ENCODE measurements at regions of chr11 and their contacts with region 1.

Region 1: DNA sequence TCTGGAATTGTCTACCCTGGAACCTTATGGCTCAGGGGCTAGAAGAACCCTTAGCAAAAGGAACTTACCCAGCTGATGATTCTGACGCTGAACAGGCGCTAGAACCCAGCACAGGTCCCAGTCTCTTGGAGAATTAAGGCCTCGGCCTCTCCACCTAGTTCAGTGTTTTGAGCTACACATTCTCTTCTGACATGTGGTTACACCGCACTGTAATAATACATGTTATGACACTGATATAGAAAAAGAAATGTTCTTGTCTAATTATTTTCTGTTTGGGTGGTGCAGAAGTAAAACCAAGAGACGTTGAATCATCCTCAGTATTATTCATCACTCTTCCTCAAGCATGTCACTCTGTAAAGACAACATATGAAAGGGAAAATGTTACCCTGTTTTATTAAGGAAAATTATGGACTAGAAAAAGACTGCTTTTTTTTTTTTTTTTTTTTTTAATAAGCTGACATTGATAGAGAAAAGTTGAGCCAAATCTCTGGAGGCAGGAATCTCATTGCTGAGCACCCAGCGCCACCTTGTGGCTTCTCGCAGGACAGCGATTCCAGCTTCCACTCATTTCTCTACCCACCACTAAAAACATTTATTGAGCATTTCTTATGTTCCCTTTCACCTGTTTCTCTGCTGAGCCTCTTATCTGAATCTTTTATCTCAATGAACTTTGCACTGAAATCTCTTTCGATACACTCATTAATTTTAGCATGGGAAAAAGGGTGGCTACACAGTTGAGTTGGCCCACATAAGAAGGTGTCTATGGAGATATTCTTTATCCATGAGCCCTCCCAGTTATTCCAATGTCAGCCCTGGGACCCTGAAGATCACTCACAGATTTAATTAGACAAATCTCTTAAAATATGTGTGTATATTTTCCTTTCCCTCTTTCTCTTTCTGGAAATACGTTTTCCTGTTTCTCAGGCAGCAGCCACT is 12.6 kb upstream of the APLNR start:
- DNase-seq: no peak
- H3K4me3 ChIP-seq: peak overlapping the region in 1 of 2 experiments; percentile 21; a peak in 1 of 4 replicates
- H3K27ac ChIP-seq: peak overlapping the region in 1 of 2 experiments; percentile 94; a peak in 2 of 4 replicates
- H3K4me1 ChIP-seq: peaks cover 0 to 15% of the 10 kb centered on the region in 2 experiments; a peak in 1 of 4 replicates
- H3K27me3 ChIP-seq: no peaks in the 10 kb centered on the region; the same call in 1 of the 2 replicates
- CTCF ChIP-seq: peak; percentile 89
- EP300 ChIP-seq: no peak
- RAD21 ChIP-seq: peak; percentile 96

Region 2: GRCh38 chr11:56885177-56885576 is 364.5 kb before region 1 on chr11:
- CTCF ChIA-PET with region 1: interaction called, 10 read pairs
- POLR2A ChIA-PET with region 1: no interaction called
- DNase-seq: peak; percentile 23
- H3K4me3 ChIP-seq: no peak overlapping the region
- H3K27ac ChIP-seq: peak overlapping the region in 1 of 2 experiments; percentile 85; a peak in 2 of 4 replicates
- H3K4me1 ChIP-seq: peaks cover 0 to 10% of the 10 kb centered on the region in 2 experiments; a peak in 2 of 4 replicates
- H3K27me3 ChIP-seq: no peaks in the 10 kb centered on the region
- CTCF ChIP-seq: no peak
- EP300 ChIP-seq: no peak
- RAD21 ChIP-seq: no peak

Region 3: GRCh38 chr11:57111619-57112018 is 138.0 kb before region 1 on chr11:
- CTCF ChIA-PET with region 1: interaction called, 125 read pairs
- POLR2A ChIA-PET with region 1: no interaction called
- DNase-seq: no peak
- H3K4me3 ChIP-seq: no peak overlapping the region
- H3K27ac ChIP-seq: no peak overlapping the region
- H3K4me1 ChIP-seq: no peaks in the 10 kb centered on the region
- H3K27me3 ChIP-seq: no peaks in the 10 kb centered on the region
- CTCF ChIP-seq: no peak
- EP300 ChIP-seq: no peak
- RAD21 ChIP-seq: no peak

Region 4: DNA sequence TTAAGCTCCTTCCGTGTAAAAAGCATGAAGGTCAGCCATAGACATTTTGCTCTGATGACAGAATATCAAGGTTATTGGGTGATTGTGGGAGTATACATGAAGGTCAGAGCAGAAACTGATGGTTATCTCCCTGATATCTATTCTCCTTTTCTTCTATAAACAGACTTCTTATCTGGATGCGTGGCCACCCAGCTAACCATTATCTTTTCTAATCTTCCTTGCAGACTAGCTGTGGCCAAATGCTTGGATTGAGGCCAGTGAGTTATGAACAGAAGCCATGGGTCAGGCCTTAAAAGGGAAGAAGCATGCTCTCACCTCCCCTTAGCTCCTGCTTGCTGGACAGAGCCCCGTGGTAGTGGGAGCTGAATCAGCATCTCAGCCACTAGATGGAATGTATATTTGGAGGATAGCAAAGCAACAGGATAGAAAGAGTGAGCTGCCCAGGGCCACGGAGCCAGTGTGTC is 99.2 kb before region 1 on chr11:
- CTCF ChIA-PET with region 1: interaction called, 90 read pairs
- POLR2A ChIA-PET with region 1: interaction called, 6 read pairs
- DNase-seq: peak; percentile 41
- H3K4me3 ChIP-seq: no peak overlapping the region
- H3K27ac ChIP-seq: peak overlapping the region in 1 of 2 experiments; percentile 96; a peak in 2 of 4 replicates
- H3K4me1 ChIP-seq: peaks cover 0 to 43% of the 10 kb centered on the region in 2 experiments; a peak in 2 of 4 replicates
- H3K27me3 ChIP-seq: no peaks in the 10 kb centered on the region
- CTCF ChIP-seq: no peak
- EP300 ChIP-seq: peak; percentile 28 to 94; a peak in 2 of 4 replicates
- RAD21 ChIP-seq: peak; percentile 22; the same call in 1 of the 2 replicates

Region 5: DNA sequence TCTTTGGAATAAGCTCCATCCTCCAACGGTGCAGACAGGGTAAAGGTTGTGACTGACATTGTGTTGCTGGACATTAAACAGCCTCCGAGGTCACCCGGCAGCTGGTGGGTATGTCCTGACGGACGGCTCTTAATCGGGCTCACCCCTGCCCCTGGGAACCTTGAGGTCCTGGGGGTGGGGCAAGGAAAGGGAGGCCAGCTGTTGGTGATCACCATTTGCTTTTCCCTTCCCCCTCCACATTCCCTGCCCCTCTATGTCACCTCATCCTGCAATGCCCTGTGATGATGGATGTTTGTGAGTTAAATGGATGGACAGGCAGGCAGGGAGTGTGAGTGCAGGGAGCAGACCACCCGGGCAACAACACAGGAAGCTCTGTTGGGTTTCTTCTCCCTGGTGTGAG is 38.9 kb before region 1 on chr11:
- CTCF ChIA-PET with region 1: interaction called, 15 read pairs
- POLR2A ChIA-PET with region 1: no interaction called
- DNase-seq: no peak
- H3K4me3 ChIP-seq: no peak overlapping the region
- H3K27ac ChIP-seq: no peak overlapping the region
- H3K4me1 ChIP-seq: peaks cover 4 to 10% of the 10 kb centered on the region in 2 experiments; a peak in 2 of 4 replicates
- H3K27me3 ChIP-seq: no peaks in the 10 kb centered on the region; the same call in 1 of the 2 replicates
- CTCF ChIP-seq: no peak
- EP300 ChIP-seq: no peak
- RAD21 ChIP-seq: no peak

Region 6: DNA sequence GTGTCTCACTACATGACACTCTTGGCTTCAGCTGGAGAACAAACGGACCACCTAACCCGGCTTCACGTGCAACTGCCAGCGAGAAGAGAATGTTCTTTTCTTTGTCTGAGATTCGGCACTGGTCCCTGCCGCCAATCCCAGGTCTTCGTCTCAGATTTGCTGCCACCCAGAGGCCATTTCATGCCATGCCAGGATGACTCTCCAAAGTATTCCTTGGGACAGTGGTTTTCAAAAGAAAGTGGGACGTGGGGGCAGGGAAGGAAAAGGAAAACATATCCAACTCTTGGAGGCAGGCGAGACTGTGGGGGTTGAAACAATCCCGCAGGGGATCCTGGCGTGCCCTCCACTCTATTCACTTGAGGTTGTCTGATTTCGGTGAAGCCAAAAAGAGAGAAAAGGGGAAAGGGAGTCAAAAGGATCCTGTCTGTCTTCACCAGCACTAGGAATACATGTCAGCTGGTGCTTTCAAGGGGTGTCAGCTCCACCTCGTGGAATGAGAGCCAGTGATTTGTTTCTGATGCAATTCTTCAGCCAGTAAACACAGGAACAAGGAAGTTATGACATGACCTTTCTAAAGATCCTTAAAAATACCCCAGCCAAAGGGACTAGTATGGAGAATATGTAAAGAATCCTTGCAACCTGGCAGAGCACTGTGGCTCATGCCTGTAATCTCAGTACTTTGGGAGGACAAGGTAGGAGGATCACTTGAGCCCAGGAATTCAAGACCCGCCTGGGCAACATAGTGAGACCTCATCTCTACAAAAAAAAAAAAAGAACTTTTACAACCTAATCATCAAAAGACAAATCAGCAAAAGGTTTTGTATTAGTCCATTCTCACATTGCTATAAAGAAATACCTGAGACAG is 28.4 kb after region 1 on chr11:
- CTCF ChIA-PET with region 1: interaction called, 45 read pairs
- POLR2A ChIA-PET with region 1: no interaction called
- DNase-seq: peak; percentile 73
- H3K4me3 ChIP-seq: peak overlapping the region in 1 of 2 experiments; percentile 39; a peak in 1 of 4 replicates
- H3K27ac ChIP-seq: peak overlapping the region in 1 of 2 experiments; percentile 32; a peak in 3 of 4 replicates
- H3K4me1 ChIP-seq: peaks cover 4 to 5% of the 10 kb centered on the region in 2 experiments; a peak in 1 of 4 replicates
- H3K27me3 ChIP-seq: no peaks in the 10 kb centered on the region
- CTCF ChIP-seq: peak; percentile 90
- EP300 ChIP-seq: no peak
- RAD21 ChIP-seq: peak; percentile 73